ENCODE measurements at regions of chr4 and their contacts with region 1.

Region 1: GRCh38 chr4:38759113-38759789 is 23.5 kb downstream of the TLR10 start:
- DNase-seq: peak; percentile 66 to 96 (median 90)

Region 2: GRCh38 chr4:38856524-38857337 is 97.5 kb after region 1 on chr4 and contains the start of gene TLR6:
- intact Hi-C with region 1: loop called (anchors 5 kb)
- DNase-seq: peak in 25 of 42 donors; percentile 20 to 85 (median 57)

Region 3: GRCh38 chr4:39134683-39135319 is 375.6 kb after region 1 on chr4:
- intact Hi-C with region 1: loop called (anchors 10 kb)
- DNase-seq: no peak